ENCODE measurements at regions of chr3 and their contacts with region 1.

Region 1: GRCh38 chr3:42600111-42600988 is at the start of gene NKTR:
- DNase-seq: peak; percentile 99 to 100 (median 100)
- ATAC-seq: peak; percentile 94
- H3K4me3 ChIP-seq: peak within 1 kb of the TSS; percentile 56 to 96
- H3K4me3 Mint-ChIP-seq: peak within 1 kb of the TSS; percentile 93
- H3K27ac ChIP-seq: peak within 1 kb of the TSS; percentile 69 to 81
- H3K27ac Mint-ChIP-seq: peak within 1 kb of the TSS; percentile 97
- H3K4me1 ChIP-seq: peaks cover 22% of the 10 kb centered on the region
- H3K4me1 Mint-ChIP-seq: peaks cover 39% of the 10 kb centered on the region
- H3K27me3 ChIP-seq: no peaks in the 10 kb centered on the region
- H3K27me3 Mint-ChIP-seq: no peaks in the 10 kb centered on the region
- CTCF ChIP-seq: no peak
- total RNA-seq, gene NKTR: 190 to 204 TPM

Region 2: DNA sequence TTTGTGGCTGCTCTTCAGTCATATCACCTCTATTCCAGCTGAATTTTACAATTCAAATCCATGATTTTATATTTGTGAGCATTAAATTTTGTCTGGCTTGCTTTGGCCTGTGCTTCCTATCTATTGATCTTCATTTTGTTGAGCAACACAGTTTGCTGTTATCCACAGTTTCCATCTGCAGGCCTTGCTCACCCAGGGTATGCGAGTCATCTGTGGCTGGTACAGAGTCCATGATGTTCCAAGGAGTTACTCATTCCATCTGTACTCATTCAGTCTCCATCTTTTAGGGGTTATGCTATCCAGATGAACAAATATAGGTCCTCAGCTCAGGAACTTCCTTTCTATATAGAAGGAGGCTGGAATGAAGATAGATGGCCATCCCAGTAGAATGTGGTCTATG is 264.2 kb before region 1 on chr3:
- CTCF ChIA-PET with region 1: no interaction called
- POLR2A ChIA-PET with region 1: no interaction called
- intact Hi-C with region 1: no loop called
- DNase-seq: no peak
- ATAC-seq: no peak
- H3K4me3 ChIP-seq: no peak overlapping the region
- H3K4me3 Mint-ChIP-seq: no peak overlapping the region
- H3K27ac ChIP-seq: no peak overlapping the region
- H3K27ac Mint-ChIP-seq: no peak overlapping the region
- H3K4me1 ChIP-seq: no peaks in the 10 kb centered on the region
- H3K4me1 Mint-ChIP-seq: no peaks in the 10 kb centered on the region
- H3K27me3 ChIP-seq: peaks cover 0 to 2% of the 10 kb centered on the region in 2 experiments
- H3K27me3 Mint-ChIP-seq: peaks cover 19% of the 10 kb centered on the region
- CTCF ChIP-seq: no peak

Region 3: DNA sequence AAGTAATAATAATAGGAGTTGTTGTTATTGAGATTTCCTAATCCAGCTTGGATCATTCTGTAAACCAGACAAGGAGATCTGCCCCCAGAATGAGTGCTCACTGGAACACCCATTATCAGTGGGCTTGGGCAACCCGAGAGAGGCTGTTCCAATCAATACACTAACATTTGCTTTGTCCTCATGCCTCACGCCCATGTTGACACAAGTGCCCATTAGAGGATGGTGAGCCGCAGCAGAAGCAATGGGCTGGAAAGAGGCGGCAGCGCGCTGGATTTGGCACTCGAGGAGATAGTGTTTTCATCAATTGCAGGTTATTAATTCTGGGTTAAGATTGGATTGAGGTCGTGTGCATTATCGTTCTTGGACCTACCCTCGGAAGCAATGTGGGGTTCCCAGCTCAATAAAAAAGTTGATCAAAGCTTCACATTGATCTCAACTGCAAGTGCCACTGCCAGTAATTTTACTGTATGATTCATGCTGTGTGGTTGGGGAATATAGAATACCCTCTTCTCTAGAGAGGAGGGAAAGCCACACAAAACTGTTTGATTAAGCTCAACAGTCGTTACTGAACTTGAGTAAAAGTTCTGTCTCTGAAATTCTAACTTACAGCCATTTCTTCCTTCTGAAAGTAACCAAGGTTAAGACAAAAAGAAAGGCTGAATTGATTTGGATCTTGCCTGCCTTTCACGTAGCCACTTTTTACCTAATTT is 205.6 kb before region 1 on chr3:
- CTCF ChIA-PET with region 1: no interaction called
- POLR2A ChIA-PET with region 1: no interaction called
- intact Hi-C with region 1: no loop called
- DNase-seq: no peak
- ATAC-seq: no peak
- H3K4me3 ChIP-seq: no peak overlapping the region
- H3K4me3 Mint-ChIP-seq: no peak overlapping the region
- H3K27ac ChIP-seq: no peak overlapping the region
- H3K27ac Mint-ChIP-seq: no peak overlapping the region
- H3K4me1 ChIP-seq: peaks cover under 1% of the 10 kb centered on the region
- H3K4me1 Mint-ChIP-seq: no peaks in the 10 kb centered on the region
- H3K27me3 ChIP-seq: no peaks in the 10 kb centered on the region
- H3K27me3 Mint-ChIP-seq: peaks cover 2% of the 10 kb centered on the region
- CTCF ChIP-seq: no peak

Region 4: DNA sequence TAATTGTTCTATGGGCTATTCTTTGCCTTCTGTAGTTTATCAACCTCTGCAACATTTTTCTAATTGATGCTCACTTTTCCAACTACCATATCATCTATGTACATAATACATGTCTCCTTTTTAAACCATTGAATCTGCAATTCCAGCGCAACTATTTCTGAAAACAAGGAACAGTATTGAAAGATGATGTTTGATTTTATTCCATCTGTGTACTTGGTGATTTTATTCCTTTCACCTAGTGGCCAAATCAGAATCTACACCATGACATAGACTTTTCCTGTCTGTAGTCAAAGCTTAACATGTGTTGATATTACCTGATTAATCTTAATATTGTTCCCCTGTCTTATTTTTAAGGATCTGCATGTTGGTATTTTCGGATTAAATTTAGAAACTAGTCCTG is 13.1 kb after region 1 on chr3:
- CTCF ChIA-PET with region 1: interaction called, 9 read pairs
- POLR2A ChIA-PET with region 1: interaction called, 7 read pairs
- intact Hi-C with region 1: loop called in 1 of 2 experiments (anchors 2 kb)
- DNase-seq: peak in 2 of 9 experiments; percentile 38 to 50
- ATAC-seq: peak; percentile 66
- H3K4me3 ChIP-seq: no peak overlapping the region
- H3K4me3 Mint-ChIP-seq: no peak overlapping the region
- H3K27ac ChIP-seq: no peak overlapping the region
- H3K27ac Mint-ChIP-seq: peak overlapping the region; percentile 10
- H3K4me1 ChIP-seq: peaks cover 23% of the 10 kb centered on the region
- H3K4me1 Mint-ChIP-seq: peaks cover 66% of the 10 kb centered on the region
- H3K27me3 ChIP-seq: no peaks in the 10 kb centered on the region
- H3K27me3 Mint-ChIP-seq: no peaks in the 10 kb centered on the region
- CTCF ChIP-seq: peak; percentile 62

Region 5: GRCh38 chr3:42635111-42635510 is 34.8 kb after region 1 on chr3:
- CTCF ChIA-PET with region 1: no interaction called
- POLR2A ChIA-PET with region 1: no interaction called
- intact Hi-C with region 1: loop called (anchors 5 kb)
- DNase-seq: peak in 1 of 9 experiments; percentile 51
- ATAC-seq: peak; percentile 51
- H3K4me3 ChIP-seq: no peak overlapping the region
- H3K4me3 Mint-ChIP-seq: no peak overlapping the region
- H3K27ac ChIP-seq: no peak overlapping the region
- H3K27ac Mint-ChIP-seq: no peak overlapping the region
- H3K4me1 ChIP-seq: peaks cover 11% of the 10 kb centered on the region
- H3K4me1 Mint-ChIP-seq: no peaks in the 10 kb centered on the region
- H3K27me3 ChIP-seq: no peaks in the 10 kb centered on the region
- H3K27me3 Mint-ChIP-seq: no peaks in the 10 kb centered on the region
- CTCF ChIP-seq: no peak

Region 6: DNA sequence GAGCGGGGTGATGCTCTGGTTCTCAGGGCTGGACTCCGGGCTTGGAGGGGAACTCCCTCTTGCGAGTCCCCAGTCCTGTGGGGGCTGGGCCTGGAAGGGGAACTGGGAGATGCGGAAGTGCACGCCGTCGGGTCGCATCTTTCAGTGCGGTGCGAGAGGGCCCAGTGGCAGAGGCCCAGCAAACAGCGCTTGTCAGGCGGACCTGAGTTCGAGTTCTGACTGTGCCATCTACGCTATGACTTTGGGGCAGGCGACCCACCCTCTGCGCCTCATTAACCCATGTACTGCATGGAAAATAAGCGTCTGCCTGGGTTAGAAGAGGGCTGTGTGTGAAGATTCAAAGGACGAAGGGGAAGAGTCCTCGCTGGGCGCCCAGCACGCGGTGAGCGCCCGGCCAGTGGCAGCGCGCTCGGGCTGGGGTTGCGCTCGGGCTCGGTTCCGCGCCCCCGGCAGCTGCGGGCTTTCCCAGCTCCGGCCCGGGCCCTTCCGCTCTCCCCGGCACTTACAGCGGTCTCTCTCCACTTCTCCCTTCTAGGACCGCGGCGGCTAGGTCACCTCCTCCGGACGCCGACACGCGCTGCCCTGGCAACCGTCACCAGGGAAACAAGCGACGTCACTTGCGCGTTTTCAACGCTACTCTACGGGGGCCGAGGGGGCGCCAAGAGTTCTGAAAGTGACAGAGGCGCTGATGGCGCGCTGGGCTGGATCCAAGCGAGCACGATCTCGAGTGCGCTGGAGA is 172.5 kb after region 1 on chr3 and contains the start of gene CCDC13:
- CTCF ChIA-PET with region 1: no interaction called
- POLR2A ChIA-PET with region 1: no interaction called
- intact Hi-C with region 1: loop called in 1 of 2 experiments (anchors 5 kb)
- DNase-seq: peak; percentile 76 to 92 (median 90)
- ATAC-seq: peak; percentile 89
- H3K4me3 ChIP-seq: peak within 1 kb of the TSS; percentile 58 to 62
- H3K4me3 Mint-ChIP-seq: peak within 1 kb of the TSS; percentile 91
- H3K27ac ChIP-seq: peak within 1 kb of the TSS in 1 of 2 experiments; percentile 38
- H3K27ac Mint-ChIP-seq: peak within 1 kb of the TSS; percentile 80
- H3K4me1 ChIP-seq: peaks cover 9% of the 10 kb centered on the region
- H3K4me1 Mint-ChIP-seq: peaks cover 12% of the 10 kb centered on the region
- H3K27me3 ChIP-seq: no peaks in the 10 kb centered on the region
- H3K27me3 Mint-ChIP-seq: no peaks in the 10 kb centered on the region
- CTCF ChIP-seq: no peak
- total RNA-seq, gene CCDC13: 0.44 TPM in 1 of 2 experiments, not detected in the other